Activated naive CD4-positive, alpha-beta T cell treated with anti-CD3 and anti-CD28 coated beads for 36 hours (primary cell): ENCODE measurements at regions of chr17 and their contacts with region 1.

Region 1: GRCh38 chr17:8300627-8301242 is 5.5 kb upstream of the SLC25A35 start:
- DNase-seq: peak; percentile 67
- H3K4me3 Mint-ChIP-seq: no peak overlapping the region
- H3K27ac Mint-ChIP-seq: no peak overlapping the region
- H3K4me1 Mint-ChIP-seq: peaks cover 7% of the 10 kb centered on the region
- H3K27me3 Mint-ChIP-seq: no peaks in the 10 kb centered on the region

Region 2: GRCh38 chr17:8079291-8080207 is 221.2 kb before region 1 on chr17:
- CTCF ChIA-PET with region 1: interaction called, 4 read pairs
- intact Hi-C with region 1: loop called (anchors 5 kb)
- DNase-seq: peak; percentile 91
- H3K4me3 Mint-ChIP-seq: peak overlapping the region; percentile 95
- H3K27ac Mint-ChIP-seq: peak overlapping the region; percentile 88
- H3K4me1 Mint-ChIP-seq: peaks cover 13% of the 10 kb centered on the region
- H3K27me3 Mint-ChIP-seq: peaks cover 2% of the 10 kb centered on the region

Region 3: DNA sequence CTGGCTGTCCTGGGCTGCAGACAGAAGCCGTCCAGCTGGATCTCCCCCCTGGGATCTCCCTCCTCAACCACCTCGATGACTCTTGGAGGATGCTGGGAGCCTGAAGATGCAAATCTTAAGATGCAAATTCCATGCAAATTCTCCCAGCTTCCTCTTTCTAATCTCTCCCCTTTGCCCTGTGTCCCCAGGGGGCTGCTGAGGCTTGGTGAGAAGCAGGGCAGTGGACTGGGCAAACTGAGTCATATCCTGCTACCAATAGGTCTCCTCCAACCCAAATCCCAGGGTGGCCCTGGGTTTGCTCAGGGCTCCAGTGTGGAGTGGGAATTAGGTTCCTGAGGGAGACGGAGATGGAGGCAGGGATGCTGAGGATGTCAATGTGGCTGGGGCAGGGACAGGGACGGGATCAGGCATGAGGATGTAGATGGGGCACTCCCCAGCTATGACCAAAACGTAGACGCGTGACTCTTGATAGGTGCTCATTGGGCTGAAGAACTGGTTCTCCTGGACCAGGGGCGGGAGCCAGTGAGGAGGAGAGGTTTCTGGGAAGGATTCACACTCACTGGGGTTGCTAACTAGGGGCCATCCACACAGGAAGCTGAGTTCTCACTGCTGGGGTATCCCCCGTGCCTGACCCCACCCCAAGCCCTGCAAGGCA is 209.6 kb before region 1 on chr17:
- CTCF ChIA-PET with region 1: interaction called, 6 read pairs
- intact Hi-C with region 1: loop called (anchors 5 kb)
- DNase-seq: no peak
- H3K4me3 Mint-ChIP-seq: no peak overlapping the region
- H3K27ac Mint-ChIP-seq: no peak overlapping the region
- H3K4me1 Mint-ChIP-seq: peaks cover 8% of the 10 kb centered on the region
- H3K27me3 Mint-ChIP-seq: peaks cover 15% of the 10 kb centered on the region

Region 4: GRCh38 chr17:8138672-8139371 is 161.9 kb before region 1 on chr17:
- CTCF ChIA-PET with region 1: interaction called, 3 read pairs
- intact Hi-C with region 1: loop called (anchors 1 kb)
- DNase-seq: peak; percentile 98
- H3K4me3 Mint-ChIP-seq: no peak overlapping the region
- H3K27ac Mint-ChIP-seq: no peak overlapping the region
- H3K4me1 Mint-ChIP-seq: peaks cover 13% of the 10 kb centered on the region
- H3K27me3 Mint-ChIP-seq: no peaks in the 10 kb centered on the region

Region 5: DNA sequence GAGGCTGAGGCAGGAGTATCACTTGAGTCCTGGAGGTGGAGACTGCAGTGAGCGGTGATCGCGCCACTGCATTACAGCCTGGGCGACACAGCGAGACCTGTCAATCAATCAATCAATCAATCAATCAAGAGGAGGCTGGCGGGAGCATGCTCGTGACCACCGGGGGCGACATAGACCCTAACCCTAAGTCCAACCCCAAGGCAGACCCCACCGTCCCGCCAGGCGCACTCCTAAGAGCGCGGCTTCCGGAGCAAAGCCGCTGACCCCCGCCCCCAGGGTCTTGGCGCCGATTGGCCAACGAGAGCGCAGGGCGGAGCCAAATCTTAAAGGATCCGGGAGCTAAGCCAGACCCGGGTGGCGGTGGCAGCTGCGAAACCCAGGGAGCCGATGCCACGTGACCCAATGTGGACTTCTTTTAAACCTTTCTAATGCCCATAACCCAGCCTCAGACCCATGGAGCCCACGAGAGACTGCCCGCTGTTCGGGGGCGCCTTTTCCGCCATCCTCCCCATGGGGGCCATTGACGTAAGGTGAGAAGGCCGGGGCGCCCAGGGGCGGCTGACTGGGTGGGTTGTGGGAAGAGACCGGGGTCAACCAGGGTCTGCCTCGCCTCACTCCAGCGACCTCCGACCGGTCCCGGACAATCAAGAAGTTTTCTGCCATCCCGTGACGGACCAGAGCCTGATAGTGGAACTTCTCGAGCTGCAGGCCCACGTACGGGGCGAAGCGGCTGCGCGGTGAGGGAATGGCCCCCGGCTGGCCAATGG is 12.2 kb before region 1 on chr17 and contains the start of gene RANGRF:
- CTCF ChIA-PET with region 1: interaction called, 11 read pairs
- intact Hi-C with region 1: no loop called
- DNase-seq: peak; percentile 91
- H3K4me3 Mint-ChIP-seq: peak within 1 kb of the TSS; percentile 88
- H3K27ac Mint-ChIP-seq: peak within 1 kb of the TSS; percentile 93
- H3K4me1 Mint-ChIP-seq: peaks cover 25% of the 10 kb centered on the region
- H3K27me3 Mint-ChIP-seq: no peaks in the 10 kb centered on the region
- total RNA-seq, gene RANGRF: 36.9 to 39.1 TPM

Region 6: GRCh38 chr17:8326511-8327302 is 26.0 kb after region 1 on chr17:
- CTCF ChIA-PET with region 1: interaction called, 10 read pairs
- intact Hi-C with region 1: no loop called
- DNase-seq: peak; percentile 50
- H3K4me3 Mint-ChIP-seq: peak overlapping the region; percentile 65
- H3K27ac Mint-ChIP-seq: no peak overlapping the region
- H3K4me1 Mint-ChIP-seq: peaks cover 18% of the 10 kb centered on the region
- H3K27me3 Mint-ChIP-seq: peaks cover 34% of the 10 kb centered on the region

Region 7: GRCh38 chr17:8542599-8543502 is 242.1 kb after region 1 on chr17:
- CTCF ChIA-PET with region 1: no interaction called
- intact Hi-C with region 1: no loop called
- DNase-seq: no peak
- H3K4me3 Mint-ChIP-seq: no peak overlapping the region
- H3K27ac Mint-ChIP-seq: no peak overlapping the region
- H3K4me1 Mint-ChIP-seq: peaks cover under 1% of the 10 kb centered on the region
- H3K27me3 Mint-ChIP-seq: no peaks in the 10 kb centered on the region